ENCODE measurements at regions of chr14 and their contacts with region 1.

Region 1: DNA sequence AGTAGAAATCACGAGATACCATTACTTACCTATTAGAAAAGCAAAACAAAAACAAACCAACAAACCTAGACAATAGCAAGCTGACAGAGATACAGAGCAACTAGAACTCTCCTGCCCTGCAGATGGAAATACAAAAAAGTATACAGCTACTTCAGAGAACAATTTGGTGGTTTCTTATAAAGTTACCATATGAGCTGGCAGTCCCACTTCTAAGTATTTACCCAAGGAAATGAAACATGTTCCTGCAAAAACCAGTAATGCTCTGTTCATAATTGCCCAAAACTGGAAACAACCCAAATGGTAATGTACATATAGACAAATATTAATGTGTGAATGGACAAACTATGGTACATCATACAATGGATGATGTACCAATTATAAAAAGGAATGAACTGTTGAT is 31.7 kb downstream of the FUT8 start:
- DNase-seq: no peak
- H3K27ac ChIP-seq: no peak overlapping the region
- CTCF ChIP-seq: no peak

Region 2: GRCh38 chr14:65239143-65239937 is 204.9 kb before region 1 on chr14:
- CTCF ChIA-PET with region 1: no interaction called
- POLR2A ChIA-PET with region 1: no interaction called
- DNase-seq: no peak
- H3K27ac ChIP-seq: no peak overlapping the region
- CTCF ChIP-seq: no peak

Region 3: GRCh38 chr14:65403231-65403630 is 41.0 kb before region 1 on chr14:
- CTCF ChIA-PET with region 1: no interaction called
- POLR2A ChIA-PET with region 1: no interaction called
- DNase-seq: no peak
- H3K27ac ChIP-seq: no peak overlapping the region
- CTCF ChIP-seq: no peak

Region 4: DNA sequence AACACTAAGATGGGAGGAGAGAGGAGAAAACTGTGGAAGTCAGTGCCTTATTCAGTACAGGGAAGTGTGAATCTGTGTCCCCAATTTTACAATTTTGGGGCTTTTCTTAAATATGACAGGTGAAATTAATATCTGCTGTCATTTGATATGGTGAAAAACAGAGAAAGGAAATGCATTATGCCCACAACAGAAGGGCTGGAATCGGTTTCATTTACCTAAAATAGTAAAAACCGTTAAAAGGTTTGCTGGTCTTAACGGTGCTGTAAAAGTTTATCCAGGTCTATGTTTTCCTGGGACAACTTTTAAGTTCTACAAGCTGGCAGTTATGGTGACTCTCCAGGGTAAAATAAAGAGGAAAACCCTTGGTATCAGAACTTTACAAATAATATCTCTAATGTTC is 279.1 kb after region 1 on chr14:
- CTCF ChIA-PET with region 1: interaction called, 13 read pairs
- POLR2A ChIA-PET with region 1: no interaction called
- DNase-seq: no peak
- H3K27ac ChIP-seq: no peak overlapping the region
- CTCF ChIP-seq: no peak

Region 5: DNA sequence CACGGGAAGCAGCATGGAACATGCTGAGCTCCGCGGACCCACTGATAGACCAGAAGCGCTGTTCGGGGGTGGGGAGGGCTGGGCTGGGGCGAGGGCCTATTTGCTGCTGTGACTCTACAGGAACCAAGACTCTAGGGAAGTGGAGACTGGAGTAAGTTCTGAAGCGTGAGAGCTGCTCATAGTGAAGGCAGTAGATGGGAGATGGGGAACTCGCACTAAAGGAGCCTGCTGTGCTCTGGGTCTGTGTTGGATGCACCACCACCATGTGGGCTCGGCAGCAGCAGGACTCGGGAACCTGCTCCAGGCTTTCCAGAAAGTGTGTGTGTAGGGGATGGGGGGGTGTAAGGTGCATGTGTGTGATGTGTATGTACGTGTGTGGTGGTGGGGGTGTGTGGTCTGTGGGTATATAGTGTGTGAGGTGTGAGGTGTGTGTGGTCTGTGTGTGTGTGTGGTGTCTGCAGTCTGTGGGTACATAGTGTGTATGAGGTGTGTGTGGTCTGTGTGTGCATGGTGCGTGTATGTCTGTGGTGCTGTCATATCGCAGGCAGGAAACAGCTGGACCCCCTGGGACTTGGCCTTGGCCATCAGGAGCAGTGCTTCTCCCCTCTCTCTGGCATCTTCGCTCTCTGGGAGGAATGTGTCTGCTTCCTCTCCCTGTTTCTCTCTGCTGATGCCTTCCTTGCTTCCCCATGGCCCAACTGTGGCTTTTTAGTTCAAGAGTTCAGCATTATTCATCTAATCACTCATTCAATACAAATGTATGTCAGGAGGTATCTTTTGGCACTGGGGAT is 347.2 kb after region 1 on chr14:
- CTCF ChIA-PET with region 1: no interaction called
- POLR2A ChIA-PET with region 1: no interaction called
- DNase-seq: no peak
- H3K27ac ChIP-seq: no peak overlapping the region
- CTCF ChIP-seq: no peak